PC-9 (cell line): ENCODE measurements at regions of chr7 and their contacts with region 1.

Region 1: GRCh38 chr7:1412322-1413261 is 46.7 kb downstream of the MICALL2 start:
- DNase-seq: peak; percentile 65 to 91
- H3K4me3 ChIP-seq: no peak overlapping the region; the same call in 1 of the 2 replicates
- H3K27ac ChIP-seq: no peak overlapping the region
- H3K4me1 ChIP-seq: no peaks in the 10 kb centered on the region
- H3K27me3 ChIP-seq: peaks cover 65% of the 10 kb centered on the region
- CTCF ChIP-seq: peak; percentile 90

Region 2: DNA sequence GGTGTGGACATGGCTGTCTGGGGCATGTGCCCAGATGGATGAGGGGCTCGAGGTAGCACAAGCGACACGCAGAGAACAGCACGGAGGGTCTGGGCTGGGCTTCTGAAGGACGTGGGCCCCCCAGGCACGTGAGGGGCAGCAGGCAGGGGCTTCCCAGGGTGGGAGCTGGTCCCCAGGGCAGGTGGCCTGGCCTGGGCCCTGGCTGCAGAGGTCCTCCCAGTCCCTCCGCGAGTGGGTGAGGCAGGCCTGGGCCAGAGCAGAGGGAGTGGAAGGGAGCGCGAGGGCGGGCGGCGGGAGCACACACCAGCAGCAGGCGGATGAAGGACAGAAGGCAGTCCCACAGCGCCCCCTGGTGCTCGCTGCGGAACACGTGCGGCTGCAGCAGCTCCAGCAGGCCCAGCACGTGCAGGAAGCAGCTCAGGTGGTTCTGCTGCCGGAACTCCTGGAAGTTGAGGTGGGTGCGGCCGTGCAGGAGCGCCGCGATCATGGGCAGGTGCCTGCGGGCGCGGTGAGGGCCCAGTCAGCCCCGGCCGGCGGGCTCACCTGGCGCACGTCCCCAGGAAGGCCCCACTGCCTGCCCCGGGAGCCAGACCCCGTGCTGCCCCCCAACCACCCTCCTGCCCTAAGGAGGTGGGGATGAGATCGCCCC is 61.4 kb after region 1 on chr7:
- CTCF ChIA-PET with region 1: interaction called, 13 read pairs
- POLR2A ChIA-PET with region 1: no interaction called
- intact Hi-C with region 1: no loop called
- DNase-seq: peak; percentile 73 to 95
- H3K4me3 ChIP-seq: no peak overlapping the region
- H3K27ac ChIP-seq: no peak overlapping the region
- H3K4me1 ChIP-seq: no peaks in the 10 kb centered on the region
- H3K27me3 ChIP-seq: no peaks in the 10 kb centered on the region
- CTCF ChIP-seq: peak; percentile 95